ENCODE measurements at regions of chr11 and their contacts with region 1.

Region 1: GRCh38 chr11:126303623-126304456 is at the start of gene DCPS:
- DNase-seq: peak; percentile 92
- H3K4me3 Mint-ChIP-seq: peak within 1 kb of the TSS; percentile 95
- H3K27ac Mint-ChIP-seq: peak within 1 kb of the TSS; percentile 96
- H3K4me1 Mint-ChIP-seq: peaks cover 34% of the 10 kb centered on the region
- H3K27me3 Mint-ChIP-seq: no peaks in the 10 kb centered on the region
- total RNA-seq, gene DCPS: 40.1 to 43.9 TPM

Region 2: GRCh38 chr11:126268708-126269579 is 34.9 kb before region 1 on chr11 and contains the starts of genes FOXRED1 and SRPRA:
- CTCF ChIA-PET with region 1: interaction called, 3 read pairs
- POLR2A ChIA-PET with region 1: interaction called, 7 read pairs
- intact Hi-C with region 1: loop called (anchors 1 kb)
- DNase-seq: peak; percentile 100
- H3K4me3 Mint-ChIP-seq: peak within 1 kb of the TSS; percentile 92
- H3K27ac Mint-ChIP-seq: peak within 1 kb of the TSS; percentile 94
- H3K4me1 Mint-ChIP-seq: peaks cover 33% of the 10 kb centered on the region
- H3K27me3 Mint-ChIP-seq: no peaks in the 10 kb centered on the region
- total RNA-seq, gene FOXRED1: 41.7 to 42.3 TPM
- total RNA-seq, gene SRPRA: 142 to 149 TPM

Region 3: GRCh38 chr11:126282736-126283591 is 20.9 kb before region 1 on chr11 and contains the start of gene TIRAP:
- CTCF ChIA-PET with region 1: no interaction called
- POLR2A ChIA-PET with region 1: interaction called, 7 read pairs
- intact Hi-C with region 1: loop called (anchors 1 kb)
- DNase-seq: peak; percentile 73
- H3K4me3 Mint-ChIP-seq: peak within 1 kb of the TSS; percentile 97
- H3K27ac Mint-ChIP-seq: peak within 1 kb of the TSS; percentile 91
- H3K4me1 Mint-ChIP-seq: peaks cover 39% of the 10 kb centered on the region
- H3K27me3 Mint-ChIP-seq: no peaks in the 10 kb centered on the region
- total RNA-seq, gene TIRAP: 7.3 to 8.8 TPM

Region 4: DNA sequence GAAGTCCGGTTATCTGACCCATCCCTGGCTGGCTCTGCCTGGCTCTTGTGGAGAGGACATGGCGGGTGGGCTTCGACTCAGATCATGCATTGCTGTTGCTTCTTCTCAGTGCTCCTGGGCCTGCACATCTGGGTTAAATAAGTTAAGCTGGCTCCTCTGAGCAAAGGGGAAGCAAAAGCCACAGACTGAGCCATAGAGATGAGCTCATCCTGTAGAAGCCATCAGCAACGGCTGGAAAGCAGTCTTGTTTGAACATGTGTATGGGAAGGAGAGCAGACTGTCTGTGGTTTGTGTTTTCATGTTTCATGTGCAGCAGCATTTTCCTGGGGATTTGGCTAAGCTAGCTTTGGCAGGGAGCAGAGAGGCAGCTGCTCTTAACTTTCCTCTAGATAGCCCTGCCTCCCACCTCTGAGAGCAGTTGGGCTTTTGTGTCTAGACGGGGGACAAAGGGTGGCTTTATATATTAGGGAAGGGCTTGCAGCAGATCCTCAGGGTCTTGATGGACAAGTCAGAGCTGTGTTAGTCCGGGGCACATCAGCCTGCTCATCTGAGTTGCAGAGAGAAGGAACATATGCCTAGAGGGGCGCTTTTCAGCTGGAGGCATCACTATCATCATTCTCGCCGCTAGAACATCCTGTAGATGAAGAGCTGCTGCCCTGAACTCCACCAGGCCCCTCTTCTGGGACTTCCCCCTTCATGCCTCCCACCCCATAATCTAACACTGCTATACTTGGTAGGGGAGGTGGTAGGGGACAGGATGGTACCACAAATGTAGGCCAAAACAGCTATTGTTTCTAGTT is 14.9 kb after region 1 on chr11:
- CTCF ChIA-PET with region 1: interaction called, 3 read pairs
- POLR2A ChIA-PET with region 1: interaction called, 4 read pairs
- intact Hi-C with region 1: loop called (anchors 1 kb)
- DNase-seq: peak; percentile 43
- H3K4me3 Mint-ChIP-seq: no peak overlapping the region
- H3K27ac Mint-ChIP-seq: peak overlapping the region; percentile 75
- H3K4me1 Mint-ChIP-seq: peaks cover 30% of the 10 kb centered on the region
- H3K27me3 Mint-ChIP-seq: no peaks in the 10 kb centered on the region

Measured in activated CD4-positive, alpha-beta memory T cell treated with anti-CD3 and anti-CD28 coated beads for 36 hours (primary cell).